PC-3 (cell line): ENCODE measurements at regions of chr1 and their contacts with region 1.

Region 1: GRCh38 chr1:147670317-147671041 is at the start of gene ACP6:
- DNase-seq: peak; percentile 98
- ATAC-seq: peak; percentile 95
- H3K4me3 ChIP-seq: peak within 1 kb of the TSS; percentile 73
- H3K27ac ChIP-seq: peak within 1 kb of the TSS; percentile 61
- H3K4me1 ChIP-seq: peaks cover 54% of the 10 kb centered on the region
- H3K27me3 ChIP-seq: no peaks in the 10 kb centered on the region
- CTCF ChIP-seq: no peak
- total RNA-seq, gene ACP6: 51.2 and 58.2 TPM in 2 replicates

Region 2: GRCh38 chr1:147618077-147618569 is 52.4 kb before region 1 on chr1:
- CTCF ChIA-PET with region 1: no interaction called
- POLR2A ChIA-PET with region 1: no interaction called
- intact Hi-C with region 1: no loop called
- DNase-seq: no peak
- ATAC-seq: no peak
- H3K4me3 ChIP-seq: no peak overlapping the region
- H3K27ac ChIP-seq: no peak overlapping the region
- H3K4me1 ChIP-seq: no peaks in the 10 kb centered on the region
- H3K27me3 ChIP-seq: no peaks in the 10 kb centered on the region
- CTCF ChIP-seq: no peak

Region 3: GRCh38 chr1:147700042-147701006 is 29.8 kb after region 1 on chr1:
- CTCF ChIA-PET with region 1: no interaction called
- POLR2A ChIA-PET with region 1: no interaction called
- intact Hi-C with region 1: loop called (anchors 5 kb)
- DNase-seq: peak; percentile 87
- ATAC-seq: peak; percentile 88
- H3K4me3 ChIP-seq: no peak overlapping the region
- H3K27ac ChIP-seq: no peak overlapping the region
- H3K4me1 ChIP-seq: peaks cover 6% of the 10 kb centered on the region
- H3K27me3 ChIP-seq: no peaks in the 10 kb centered on the region
- CTCF ChIP-seq: peak; percentile 99

Region 4: DNA sequence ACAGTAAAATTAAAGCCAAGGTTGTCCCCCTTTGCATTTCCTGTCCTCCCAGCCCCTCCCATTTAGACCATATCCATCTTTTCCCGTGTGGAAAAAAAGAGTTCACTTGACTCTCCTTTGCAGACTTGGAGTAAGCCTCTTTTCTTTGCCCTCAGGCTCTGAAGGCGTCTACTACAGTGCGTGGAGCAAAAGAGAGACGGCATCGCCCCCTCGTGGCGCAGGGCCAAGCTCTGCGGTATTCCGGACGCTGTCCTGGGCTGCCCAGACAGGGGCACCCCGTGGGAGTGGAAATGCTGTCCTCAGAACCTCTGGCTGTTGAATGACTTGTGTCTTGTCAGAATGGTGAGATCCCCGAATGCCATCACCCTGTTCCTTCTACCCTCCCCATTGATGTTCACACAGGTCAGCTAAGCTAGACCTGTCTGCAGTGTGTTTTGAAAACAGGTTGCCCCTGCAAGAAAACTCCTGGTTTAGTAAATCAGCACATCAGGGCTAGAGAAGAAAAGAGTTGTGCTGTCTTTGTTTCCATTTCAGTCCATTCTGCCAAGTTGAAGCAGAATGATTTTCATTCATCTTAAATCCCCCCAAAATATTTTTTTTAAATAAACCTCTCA is 219.8 kb after region 1 on chr1:
- CTCF ChIA-PET with region 1: no interaction called
- POLR2A ChIA-PET with region 1: no interaction called
- intact Hi-C with region 1: no loop called
- DNase-seq: peak; percentile 97
- ATAC-seq: peak; percentile 86
- H3K4me3 ChIP-seq: no peak overlapping the region
- H3K27ac ChIP-seq: no peak overlapping the region
- H3K4me1 ChIP-seq: peaks cover 26% of the 10 kb centered on the region
- H3K27me3 ChIP-seq: no peaks in the 10 kb centered on the region
- CTCF ChIP-seq: peak; percentile 98